Esophagus muscularis mucosa (tissue), 4 donors: ENCODE measurements at regions of chr5 and their contacts with region 1.

Region 1: GRCh38 chr5:35182541-35183535 is 47.4 kb downstream of the PRLR start:
- DNase-seq: no peak
- H3K4me3 ChIP-seq: no peak overlapping the region
- H3K27ac ChIP-seq: no peak overlapping the region
- H3K4me1 ChIP-seq: no peaks in the 10 kb centered on the region
- H3K27me3 ChIP-seq: peaks cover 0 to 6% (median 0%) of the 10 kb centered on the region in 4 donors
- CTCF ChIP-seq: peak in 1 of 3 experiments; percentile 38
- EP300 ChIP-seq: no peak
- POLR2A ChIP-seq: no peak

Region 2: DNA sequence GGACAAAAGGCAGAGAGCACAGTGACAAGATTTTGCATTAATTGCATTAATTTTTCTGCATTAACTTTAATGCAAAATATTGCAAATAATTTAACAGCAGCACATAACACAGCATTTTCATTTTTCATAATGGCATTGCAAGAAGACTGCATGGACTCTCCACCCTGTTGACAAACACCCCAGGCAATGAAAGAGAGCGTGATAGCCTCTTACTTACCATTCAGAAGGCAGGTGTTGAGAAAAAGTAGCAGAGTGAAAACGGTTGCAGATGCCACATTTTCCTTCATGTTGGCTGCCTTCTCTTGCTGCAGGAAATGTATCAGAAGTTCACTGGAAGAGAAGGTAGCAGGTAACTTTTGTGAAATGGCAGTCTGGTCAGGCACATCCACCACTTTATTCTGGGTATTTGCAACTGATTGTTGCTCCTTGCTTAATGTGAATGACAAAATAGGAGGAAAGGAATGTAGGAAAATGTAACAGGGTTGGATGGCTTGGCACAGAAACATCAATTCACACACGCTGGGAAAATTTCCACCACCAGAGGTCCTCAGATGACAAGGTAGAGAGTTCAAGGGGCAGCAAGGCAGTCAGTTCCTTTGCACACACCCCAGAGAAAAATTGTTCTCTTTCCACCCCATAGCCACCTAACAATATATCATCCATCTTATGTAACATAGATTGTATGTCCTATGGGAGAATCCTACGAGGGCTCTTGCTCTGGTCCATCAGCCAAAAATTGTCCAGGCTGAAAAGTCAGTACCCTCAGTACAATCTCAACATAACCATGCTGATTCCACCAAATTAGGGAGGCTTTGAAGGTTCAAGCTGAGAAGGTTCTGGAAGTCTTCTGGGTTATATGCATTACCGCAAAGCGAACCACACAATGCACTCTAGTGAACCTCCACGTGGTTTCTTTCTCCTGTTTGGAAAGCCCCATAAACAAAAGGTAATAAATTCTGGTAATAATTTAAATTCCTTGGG is 93.2 kb before region 1 on chr5:
- intact Hi-C with region 1: loop called (anchors 10 kb)
- DNase-seq: no peak
- H3K4me3 ChIP-seq: no peak overlapping the region
- H3K27ac ChIP-seq: no peak overlapping the region
- H3K4me1 ChIP-seq: peaks cover 0 to 11% (median 4%) of the 10 kb centered on the region in 4 donors
- H3K27me3 ChIP-seq: no peaks in the 10 kb centered on the region
- CTCF ChIP-seq: peak; percentile 21 to 64 (median 42)
- EP300 ChIP-seq: no peak
- POLR2A ChIP-seq: no peak